IMR-90 (cell line): ENCODE measurements at regions of chr1 and their contacts with region 1.

Region 1: DNA sequence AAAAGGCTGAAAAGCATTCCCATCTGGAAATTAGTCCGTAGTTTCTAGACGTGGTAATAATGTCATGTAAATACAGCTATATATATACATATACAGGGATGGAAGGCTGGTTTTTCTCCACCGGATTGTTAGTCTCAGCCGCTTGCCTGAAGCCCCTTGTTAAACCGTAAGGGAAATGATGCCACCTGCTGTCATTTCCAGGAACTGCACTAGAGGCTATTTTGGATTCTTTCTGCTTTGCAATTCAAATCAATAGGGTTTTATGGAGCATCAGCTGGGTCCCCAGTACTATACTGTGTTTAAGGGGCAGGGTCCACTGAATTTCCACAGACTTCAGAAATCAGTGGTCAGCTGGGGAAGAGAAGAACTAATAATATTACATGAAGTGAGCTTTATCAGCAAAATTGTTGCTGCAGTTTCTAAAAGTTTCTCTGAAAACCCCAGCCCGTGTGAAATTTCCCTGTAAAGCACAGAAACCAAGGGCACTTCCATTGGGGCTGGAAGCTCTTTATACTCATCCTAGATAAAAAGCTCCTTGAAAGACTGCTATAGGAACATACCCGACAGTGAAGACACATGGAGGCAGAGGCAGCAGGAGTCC is 33.8 kb upstream of the MPZL1 start:
- DNase-seq: peak; percentile 78
- ATAC-seq: peak; percentile 82
- H3K4me3 ChIP-seq: no peak overlapping the region
- H3K27ac ChIP-seq: no peak overlapping the region
- H3K4me1 ChIP-seq: no peaks in the 10 kb centered on the region
- H3K27me3 ChIP-seq: peaks cover 24% of the 10 kb centered on the region
- CTCF ChIP-seq: peak; percentile 89
- POLR2A ChIP-seq: no peak
- RAD21 ChIP-seq: peak; percentile 82

Region 2: DNA sequence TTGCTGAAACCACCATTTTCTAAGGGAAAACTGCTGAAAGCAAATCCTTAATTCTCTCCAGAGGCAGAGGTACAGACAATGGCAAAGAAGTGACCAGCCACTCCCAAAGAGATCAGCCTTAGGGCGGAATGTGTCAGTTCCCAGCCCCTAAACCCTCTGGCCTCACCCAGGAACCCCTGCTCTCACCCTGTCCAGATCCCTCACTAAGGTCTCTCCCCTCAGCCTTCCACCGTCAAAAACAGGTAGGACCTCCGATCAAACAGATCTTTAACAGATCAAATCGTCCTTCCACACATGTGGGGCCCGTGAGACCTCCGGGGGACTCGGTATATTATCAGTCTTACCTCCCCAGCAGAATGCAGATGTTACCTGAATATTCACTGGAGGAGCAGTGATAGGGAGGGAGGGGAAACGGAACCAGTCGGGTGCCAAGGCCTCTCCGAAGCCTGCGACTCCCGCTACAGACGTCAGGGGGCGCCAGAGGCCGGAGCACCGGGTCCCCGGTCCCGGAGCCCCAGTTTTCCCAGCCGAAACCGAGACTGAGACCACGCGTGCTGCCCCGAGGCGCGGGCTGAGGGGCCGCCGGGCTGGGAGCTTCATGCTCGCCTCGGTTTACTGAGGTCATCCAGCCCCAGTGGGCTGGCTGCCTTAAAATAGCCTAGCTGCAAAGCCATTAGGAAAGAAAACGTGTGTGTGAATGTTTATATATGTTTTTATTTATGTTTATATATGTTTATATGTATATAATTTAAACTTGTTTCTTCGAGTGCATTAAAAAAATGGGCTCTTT is 621.5 kb before region 1 on chr1:
- CTCF ChIA-PET with region 1: no interaction called
- POLR2A ChIA-PET with region 1: no interaction called
- dilution Hi-C with region 1: no loop called
- in situ Hi-C with region 1: no loop called
- intact Hi-C with region 1: loop called (anchors 5 kb)
- DNase-seq: peak; percentile 15
- ATAC-seq: peak; percentile 98
- H3K4me3 ChIP-seq: peak overlapping the region; percentile 23; the same call in 1 of the 2 replicates
- H3K27ac ChIP-seq: no peak overlapping the region
- H3K4me1 ChIP-seq: no peaks in the 10 kb centered on the region
- H3K27me3 ChIP-seq: peaks cover 15% of the 10 kb centered on the region
- CTCF ChIP-seq: peak; percentile 91
- POLR2A ChIP-seq: no peak
- RAD21 ChIP-seq: peak; percentile 92

Region 3: DNA sequence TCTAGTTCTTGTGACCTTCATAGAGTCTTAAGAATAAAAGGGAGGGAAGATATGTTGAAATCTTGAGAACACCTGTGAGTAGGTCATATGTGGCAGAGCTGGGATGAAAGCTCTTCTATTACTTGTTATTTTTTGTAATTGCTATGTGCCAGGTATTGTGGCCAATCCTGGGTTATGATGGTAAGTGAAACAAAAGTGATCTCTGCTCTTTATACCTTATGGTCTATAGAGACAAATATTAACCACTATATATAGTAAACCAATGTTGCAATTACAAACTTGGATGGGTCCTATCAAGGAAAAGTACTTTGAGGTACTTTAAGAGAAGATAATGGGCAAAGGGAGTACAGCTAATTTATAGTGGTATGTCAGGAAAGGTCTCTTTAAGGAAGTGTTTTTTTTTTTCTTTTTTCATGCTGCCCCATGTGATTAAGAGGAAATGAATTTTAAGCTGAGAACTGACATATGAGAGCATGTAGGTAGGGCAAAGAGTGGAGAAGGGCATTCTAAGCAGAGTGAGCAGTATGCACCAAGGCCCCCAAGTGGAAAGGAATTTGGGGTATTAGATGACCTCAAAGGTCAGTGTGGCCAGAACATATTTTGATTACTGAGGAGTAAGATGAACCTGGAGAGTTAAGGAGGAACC is 424.1 kb before region 1 on chr1:
- CTCF ChIA-PET with region 1: no interaction called
- POLR2A ChIA-PET with region 1: no interaction called
- dilution Hi-C with region 1: no loop called
- in situ Hi-C with region 1: loop called (anchors 25 kb)
- intact Hi-C with region 1: loop called (anchors 5 kb)
- DNase-seq: no peak
- ATAC-seq: no peak
- H3K4me3 ChIP-seq: no peak overlapping the region
- H3K27ac ChIP-seq: no peak overlapping the region
- H3K4me1 ChIP-seq: peaks cover under 1% of the 10 kb centered on the region; the same call in 1 of the 2 replicates
- H3K27me3 ChIP-seq: no peaks in the 10 kb centered on the region
- CTCF ChIP-seq: no peak
- POLR2A ChIP-seq: no peak
- RAD21 ChIP-seq: no peak

Region 4: DNA sequence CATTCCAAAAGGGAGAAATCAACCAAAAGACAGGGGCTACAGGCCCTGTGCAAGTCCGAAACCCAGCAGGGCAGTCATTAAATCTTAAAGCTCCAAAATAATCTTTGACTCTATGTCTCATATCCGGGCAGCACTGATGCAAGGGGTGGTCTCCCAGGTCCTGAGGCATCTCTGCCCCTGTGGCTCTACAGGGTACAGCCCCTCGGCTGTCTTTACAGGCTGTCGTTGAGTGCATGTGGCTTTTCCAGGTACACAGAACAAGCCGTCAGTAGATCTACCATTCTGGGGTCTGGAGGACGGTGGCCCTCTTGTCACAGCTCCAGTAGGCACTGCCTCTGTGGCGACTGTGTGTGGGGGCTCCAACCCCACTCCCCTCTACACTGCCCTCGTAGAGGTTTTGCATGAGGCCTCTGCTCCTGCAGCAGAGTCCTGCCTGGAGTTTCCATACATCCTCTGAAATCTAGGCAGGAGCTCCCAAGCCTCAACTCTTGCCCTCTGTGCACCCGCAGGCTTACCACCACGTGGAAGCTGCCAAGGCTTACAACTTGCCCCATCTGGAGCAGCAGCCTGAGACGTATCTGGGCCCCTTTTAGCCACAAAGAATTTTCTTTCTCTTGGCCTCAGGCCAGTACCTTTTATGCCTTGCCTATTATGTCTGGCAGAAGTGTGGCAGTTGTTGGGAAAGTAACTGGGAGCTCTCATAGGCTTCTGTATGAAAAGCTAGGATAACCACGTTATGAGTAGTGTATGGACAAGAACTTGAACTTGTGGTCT is 414.8 kb before region 1 on chr1:
- CTCF ChIA-PET with region 1: no interaction called
- POLR2A ChIA-PET with region 1: no interaction called
- dilution Hi-C with region 1: no loop called
- in situ Hi-C with region 1: loop called (anchors 25 kb)
- intact Hi-C with region 1: loop called (anchors 5 kb)
- DNase-seq: peak; percentile 8
- ATAC-seq: no peak; the same call in 1 of the 2 replicates
- H3K4me3 ChIP-seq: no peak overlapping the region
- H3K27ac ChIP-seq: no peak overlapping the region
- H3K4me1 ChIP-seq: no peaks in the 10 kb centered on the region
- H3K27me3 ChIP-seq: no peaks in the 10 kb centered on the region
- CTCF ChIP-seq: no peak
- POLR2A ChIP-seq: no peak
- RAD21 ChIP-seq: no peak

Region 5: GRCh38 chr1:167430134-167430856 is 257.7 kb before region 1 on chr1:
- CTCF ChIA-PET with region 1: no interaction called
- POLR2A ChIA-PET with region 1: no interaction called
- dilution Hi-C with region 1: no loop called
- in situ Hi-C with region 1: no loop called
- intact Hi-C with region 1: no loop called
- DNase-seq: no peak
- ATAC-seq: no peak
- H3K4me3 ChIP-seq: no peak overlapping the region
- H3K27ac ChIP-seq: no peak overlapping the region
- H3K4me1 ChIP-seq: no peaks in the 10 kb centered on the region; the same call in 1 of the 2 replicates
- H3K27me3 ChIP-seq: peaks cover 1% of the 10 kb centered on the region; the same call in 1 of the 2 replicates
- CTCF ChIP-seq: no peak
- POLR2A ChIP-seq: no peak
- RAD21 ChIP-seq: no peak

Region 6: GRCh38 chr1:167454894-167455785 is 232.9 kb before region 1 on chr1:
- CTCF ChIA-PET with region 1: no interaction called
- POLR2A ChIA-PET with region 1: no interaction called
- dilution Hi-C with region 1: no loop called
- in situ Hi-C with region 1: no loop called
- intact Hi-C with region 1: loop called (anchors 10 kb)
- DNase-seq: no peak
- ATAC-seq: peak; percentile 83
- H3K4me3 ChIP-seq: peak overlapping the region; percentile 56
- H3K27ac ChIP-seq: no peak overlapping the region
- H3K4me1 ChIP-seq: no peaks in the 10 kb centered on the region
- H3K27me3 ChIP-seq: peaks cover 25% of the 10 kb centered on the region
- CTCF ChIP-seq: no peak
- POLR2A ChIP-seq: no peak
- RAD21 ChIP-seq: no peak

Region 7: DNA sequence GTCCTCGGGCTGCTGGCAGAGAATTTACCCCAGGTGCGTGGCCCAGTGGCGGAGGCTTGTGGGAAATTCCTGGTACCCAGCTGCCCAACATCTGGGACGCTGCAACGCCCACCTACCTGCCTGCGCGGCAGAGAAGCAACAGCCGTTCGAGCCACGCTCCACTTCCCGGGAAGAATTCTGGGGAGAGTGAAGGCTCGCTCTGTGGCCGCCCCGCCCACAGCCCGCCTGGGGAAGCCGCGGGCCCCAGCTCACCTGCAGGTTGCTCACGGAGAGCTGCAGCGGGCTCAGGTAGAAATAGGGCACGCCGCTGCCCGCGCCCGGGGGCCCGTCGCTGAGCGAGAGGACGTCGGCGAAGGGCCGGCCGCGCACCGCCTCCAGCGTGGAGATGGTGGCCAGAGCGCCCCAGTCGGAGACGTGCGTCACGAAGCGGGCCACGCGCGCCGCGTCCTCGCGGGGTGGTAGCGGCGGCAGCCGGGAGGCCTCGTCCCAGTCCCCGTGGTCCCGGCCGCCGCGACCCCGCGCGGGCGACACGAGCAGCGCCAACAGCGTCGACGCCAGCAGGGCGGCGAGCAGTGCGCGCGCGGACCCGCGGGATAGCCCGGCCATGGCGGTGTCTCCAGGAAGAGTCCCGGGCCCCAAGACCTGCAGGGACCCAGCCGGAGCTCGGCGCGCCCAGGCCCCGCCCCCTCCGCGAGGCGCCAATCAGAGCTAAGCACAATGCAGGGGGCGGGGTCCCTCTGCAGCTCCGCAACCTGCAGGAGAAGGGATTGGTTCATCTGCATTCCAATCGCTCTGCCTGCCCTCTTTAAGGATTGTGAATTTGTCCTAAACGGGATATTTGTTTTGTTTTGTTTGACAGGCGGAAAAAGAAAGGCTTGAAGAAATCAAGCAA is 134.6 kb before region 1 on chr1 and contains the start of gene CREG1:
- CTCF ChIA-PET with region 1: interaction called, 7 read pairs
- POLR2A ChIA-PET with region 1: no interaction called
- dilution Hi-C with region 1: no loop called
- in situ Hi-C with region 1: no loop called
- intact Hi-C with region 1: loop called (anchors 1 kb)
- DNase-seq: peak; percentile 78
- ATAC-seq: peak; percentile 100
- H3K4me3 ChIP-seq: peak within 1 kb of the TSS; percentile 80
- H3K27ac ChIP-seq: no peak within 1 kb of the TSS
- H3K4me1 ChIP-seq: peaks cover 4% of the 10 kb centered on the region; the same call in 1 of the 2 replicates
- H3K27me3 ChIP-seq: peaks cover 3% of the 10 kb centered on the region
- CTCF ChIP-seq: no peak
- POLR2A ChIP-seq: no peak
- RAD21 ChIP-seq: no peak
- total RNA-seq, gene CREG1: 2.9 and 3.3 TPM in 2 replicates

Region 8: GRCh38 chr1:167599957-167600581 is 88.0 kb before region 1 on chr1:
- CTCF ChIA-PET with region 1: interaction called, 22 read pairs
- POLR2A ChIA-PET with region 1: no interaction called
- dilution Hi-C with region 1: no loop called
- in situ Hi-C with region 1: no loop called
- intact Hi-C with region 1: loop called (anchors 1 kb)
- DNase-seq: peak; percentile 22
- ATAC-seq: peak; percentile 73
- H3K4me3 ChIP-seq: no peak overlapping the region
- H3K27ac ChIP-seq: no peak overlapping the region
- H3K4me1 ChIP-seq: no peaks in the 10 kb centered on the region
- H3K27me3 ChIP-seq: peaks cover 5% of the 10 kb centered on the region
- CTCF ChIP-seq: peak; percentile 38
- POLR2A ChIP-seq: no peak
- RAD21 ChIP-seq: peak; percentile 43

Region 9: GRCh38 chr1:167904652-167905130 is 216.7 kb after region 1 on chr1:
- CTCF ChIA-PET with region 1: no interaction called
- POLR2A ChIA-PET with region 1: no interaction called
- dilution Hi-C with region 1: no loop called
- in situ Hi-C with region 1: no loop called
- intact Hi-C with region 1: no loop called
- DNase-seq: peak; percentile 93
- ATAC-seq: peak; percentile 94
- H3K4me3 ChIP-seq: no peak overlapping the region
- H3K27ac ChIP-seq: peak overlapping the region; percentile 36; the same call in 1 of the 2 replicates
- H3K4me1 ChIP-seq: peaks cover 11% of the 10 kb centered on the region
- H3K27me3 ChIP-seq: no peaks in the 10 kb centered on the region
- CTCF ChIP-seq: 0 out of 2 replicates have a peak, but pooled peaks have one; percentile 21
- POLR2A ChIP-seq: no peak
- RAD21 ChIP-seq: peak; percentile 41